Activated CD8-positive, alpha-beta memory T cell treated with anti-CD3 and anti-CD28 coated beads, Interleukin-2, amount 10 ng/mL, durations not matched to agents 7 days and 5 days (primary cell): ENCODE measurements at regions of chr7 and their contacts with region 1.

Region 1: GRCh38 chr7:129825496-129826267 is 127.1 kb downstream of the UBE2H start:
- DNase-seq: peak; percentile 91
- ATAC-seq: peak; percentile 85
- H3K4me3 Mint-ChIP-seq: peak overlapping the region; percentile 87
- H3K27ac Mint-ChIP-seq: peak overlapping the region; percentile 82
- H3K4me1 Mint-ChIP-seq: peaks cover 24% of the 10 kb centered on the region
- H3K27me3 Mint-ChIP-seq: peaks cover 3% of the 10 kb centered on the region

Region 2: DNA sequence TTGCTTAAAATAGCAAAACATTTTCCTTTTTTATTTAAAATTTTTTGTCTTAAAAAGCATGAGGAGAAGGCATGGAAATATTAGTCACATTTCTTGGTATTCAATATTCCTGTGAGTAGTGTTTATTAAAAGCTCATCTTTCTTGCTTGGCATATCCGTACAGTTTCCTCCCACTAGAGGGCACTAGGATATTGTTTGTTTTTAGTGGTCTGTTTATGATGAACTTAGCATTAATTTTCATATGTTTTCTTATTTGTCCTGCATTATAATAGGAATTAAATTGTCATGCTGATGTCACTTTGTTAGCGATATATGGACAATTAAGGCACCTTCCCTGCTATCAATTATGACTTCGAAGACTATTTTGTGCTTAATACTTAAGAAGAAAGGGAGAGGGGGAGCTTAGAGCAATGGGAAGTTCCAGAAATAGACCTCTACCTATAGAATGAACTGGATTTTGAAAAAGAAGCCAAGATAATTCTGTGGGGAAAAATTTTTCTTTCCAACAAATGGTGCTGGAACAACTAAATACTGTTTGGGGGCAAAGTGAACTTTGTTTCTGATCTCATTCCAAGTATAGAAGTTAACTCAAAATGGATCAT is 482.5 kb before region 1 on chr7:
- CTCF ChIA-PET with region 1: interaction called, 10 read pairs
- DNase-seq: no peak
- ATAC-seq: no peak
- H3K4me3 Mint-ChIP-seq: no peak overlapping the region
- H3K27ac Mint-ChIP-seq: no peak overlapping the region
- H3K4me1 Mint-ChIP-seq: peaks cover 41% of the 10 kb centered on the region
- H3K27me3 Mint-ChIP-seq: peaks cover 7% of the 10 kb centered on the region

Region 3: DNA sequence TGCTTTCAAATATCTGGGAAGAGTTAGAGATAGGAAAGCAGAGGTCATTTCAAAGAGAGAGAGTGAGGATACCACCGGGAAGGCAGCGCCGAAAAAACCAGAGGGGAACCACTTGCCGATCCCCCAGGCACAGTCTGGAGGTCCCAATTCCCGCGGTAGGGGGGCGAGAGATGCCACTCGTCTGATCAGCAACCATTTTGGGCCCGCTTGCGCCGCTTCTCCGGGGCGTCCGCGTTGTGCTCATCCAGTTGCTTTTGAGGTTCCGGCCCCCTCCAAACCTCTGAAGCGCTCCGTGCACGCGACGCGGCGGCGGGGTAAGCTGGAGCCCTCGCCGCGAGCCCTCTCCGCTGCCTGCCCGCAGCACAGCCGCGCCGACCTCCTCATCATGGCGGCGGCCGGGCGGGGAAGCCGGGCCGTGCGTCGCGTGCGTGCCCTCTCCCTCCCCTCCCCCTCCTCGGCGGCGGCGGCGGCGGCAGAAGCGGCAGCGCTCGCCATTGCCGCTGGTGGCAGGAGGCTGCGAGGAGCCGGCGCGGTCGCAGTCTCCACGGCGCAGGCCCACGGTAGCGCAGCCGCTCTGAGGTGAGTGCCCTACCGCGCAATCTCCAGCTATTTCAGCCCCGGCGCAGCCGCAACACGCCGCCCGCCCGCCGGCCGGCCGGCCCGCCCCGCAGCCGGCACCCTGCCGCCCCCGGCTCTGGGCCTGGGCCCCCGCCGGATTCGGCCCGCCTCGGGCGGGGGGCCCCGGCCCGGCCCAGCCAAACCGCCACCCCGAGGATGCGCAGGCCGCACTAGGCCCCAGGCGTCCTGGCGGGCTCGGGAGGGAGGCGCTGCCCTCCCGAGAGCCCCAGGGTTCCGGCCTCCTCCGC is 214.2 kb before region 1 on chr7 and contains the start of gene NRF1:
- CTCF ChIA-PET with region 1: interaction called, 21 read pairs
- DNase-seq: peak; percentile 92
- ATAC-seq: peak; percentile 88
- H3K4me3 Mint-ChIP-seq: peak within 1 kb of the TSS; percentile 94
- H3K27ac Mint-ChIP-seq: peak within 1 kb of the TSS; percentile 92
- H3K4me1 Mint-ChIP-seq: peaks cover 56% of the 10 kb centered on the region
- H3K27me3 Mint-ChIP-seq: no peaks in the 10 kb centered on the region
- total RNA-seq, gene NRF1: 26.4 to 29.5 TPM

Region 4: GRCh38 chr7:129635300-129636029 is 190.2 kb before region 1 on chr7:
- CTCF ChIA-PET with region 1: interaction called, 11 read pairs
- DNase-seq: peak; percentile 79
- ATAC-seq: peak; percentile 96
- H3K4me3 Mint-ChIP-seq: no peak overlapping the region
- H3K27ac Mint-ChIP-seq: no peak overlapping the region
- H3K4me1 Mint-ChIP-seq: peaks cover 22% of the 10 kb centered on the region
- H3K27me3 Mint-ChIP-seq: no peaks in the 10 kb centered on the region

Region 5: DNA sequence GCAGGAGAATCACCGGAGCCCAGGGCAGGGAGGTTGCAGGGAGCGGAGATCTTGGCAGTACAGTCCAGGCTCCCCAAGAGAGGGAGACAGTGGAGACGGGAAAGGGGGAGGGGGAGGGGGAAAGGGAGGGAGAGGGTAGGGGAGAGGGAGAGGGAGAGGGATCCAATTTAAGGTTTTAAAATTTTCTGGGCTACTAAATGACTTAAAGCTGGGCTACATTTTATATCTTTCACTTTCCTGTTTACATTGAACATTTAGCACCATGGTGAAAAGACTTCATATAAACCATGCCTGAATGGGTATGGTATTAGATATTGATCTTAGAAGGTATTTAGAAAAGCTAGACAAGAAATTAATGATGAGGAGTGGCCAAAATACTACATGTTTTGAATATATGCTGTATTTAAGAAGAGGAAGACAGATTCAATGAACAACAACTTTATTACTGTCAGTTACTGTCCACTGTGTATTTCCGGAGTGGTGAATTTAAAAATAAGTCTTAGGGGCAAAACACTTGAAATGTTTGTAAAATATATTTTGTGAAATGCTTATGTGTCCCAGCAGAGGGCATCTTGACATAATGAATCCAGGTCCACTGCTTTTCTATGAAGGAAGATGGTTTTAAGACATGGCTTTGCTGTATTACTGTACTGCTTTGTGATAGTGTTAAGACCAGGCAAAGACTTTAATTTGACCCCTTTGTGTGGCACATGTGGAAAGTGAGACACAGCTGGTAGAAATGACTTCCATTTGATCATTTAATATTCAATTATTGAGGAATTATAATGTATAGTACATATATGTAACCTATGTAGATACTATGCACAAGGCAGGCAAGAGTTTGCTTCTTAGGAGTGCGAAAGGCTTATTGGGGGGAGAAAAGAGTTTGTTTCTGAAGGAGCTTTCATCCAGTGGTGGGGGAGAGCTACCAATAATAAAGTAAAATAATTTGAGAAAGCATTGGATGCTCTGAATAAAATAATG is 161.4 kb before region 1 on chr7:
- CTCF ChIA-PET with region 1: interaction called, 17 read pairs
- DNase-seq: no peak
- ATAC-seq: no peak
- H3K4me3 Mint-ChIP-seq: no peak overlapping the region
- H3K27ac Mint-ChIP-seq: no peak overlapping the region
- H3K4me1 Mint-ChIP-seq: no peaks in the 10 kb centered on the region
- H3K27me3 Mint-ChIP-seq: no peaks in the 10 kb centered on the region

Region 6: GRCh38 chr7:129840757-129841156 is 15.1 kb after region 1 on chr7:
- CTCF ChIA-PET with region 1: interaction called, 12 read pairs
- DNase-seq: no peak
- ATAC-seq: no peak
- H3K4me3 Mint-ChIP-seq: no peak overlapping the region
- H3K27ac Mint-ChIP-seq: peak overlapping the region; percentile 32
- H3K4me1 Mint-ChIP-seq: peaks cover 43% of the 10 kb centered on the region
- H3K27me3 Mint-ChIP-seq: no peaks in the 10 kb centered on the region

Region 7: GRCh38 chr7:129882531-129882930 is 56.8 kb after region 1 on chr7:
- CTCF ChIA-PET with region 1: no interaction called
- DNase-seq: no peak
- ATAC-seq: no peak
- H3K4me3 Mint-ChIP-seq: no peak overlapping the region
- H3K27ac Mint-ChIP-seq: no peak overlapping the region
- H3K4me1 Mint-ChIP-seq: peaks cover 24% of the 10 kb centered on the region
- H3K27me3 Mint-ChIP-seq: no peaks in the 10 kb centered on the region

Region 8: DNA sequence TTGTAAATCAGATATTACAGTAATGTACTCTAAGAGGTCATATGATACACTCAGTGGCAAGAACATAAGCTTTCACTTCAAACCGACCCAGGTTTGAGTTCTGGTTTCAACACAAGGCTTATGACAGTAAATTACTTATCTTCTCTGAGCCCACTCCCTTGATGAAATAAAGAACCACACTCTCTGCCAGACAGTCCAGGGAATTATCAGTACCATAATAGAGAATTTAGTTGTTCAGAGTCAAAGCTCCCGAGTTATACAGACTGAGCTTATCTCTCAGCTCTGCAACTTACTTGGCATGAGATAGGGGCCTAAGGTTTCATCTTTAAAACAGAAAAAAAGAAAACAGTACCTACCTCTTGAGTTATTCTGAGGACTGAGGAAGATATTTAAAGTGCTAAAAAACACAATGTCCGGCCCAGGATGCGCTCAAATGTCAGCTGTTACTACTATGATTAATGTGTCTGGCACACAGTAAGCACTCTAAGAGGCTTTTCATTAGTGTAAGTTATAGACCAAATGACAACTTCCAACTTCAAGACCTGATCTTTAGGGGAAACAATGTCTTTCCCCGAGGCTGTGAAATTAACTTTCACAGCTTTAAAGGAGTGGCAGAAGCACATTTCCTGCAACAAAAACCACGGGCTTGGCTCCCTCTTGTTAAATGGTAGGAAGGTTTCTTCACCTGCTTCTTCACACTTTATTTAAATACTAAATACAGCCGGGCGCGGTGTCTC is 89.0 kb after region 1 on chr7:
- CTCF ChIA-PET with region 1: no interaction called
- DNase-seq: no peak
- ATAC-seq: no peak
- H3K4me3 Mint-ChIP-seq: no peak overlapping the region
- H3K27ac Mint-ChIP-seq: no peak overlapping the region
- H3K4me1 Mint-ChIP-seq: peaks cover 11% of the 10 kb centered on the region
- H3K27me3 Mint-ChIP-seq: no peaks in the 10 kb centered on the region

Region 9: GRCh38 chr7:130010689-130011412 is 185.2 kb after region 1 on chr7:
- CTCF ChIA-PET with region 1: interaction called, 115 read pairs
- DNase-seq: peak; percentile 93
- ATAC-seq: peak; percentile 70
- H3K4me3 Mint-ChIP-seq: no peak overlapping the region
- H3K27ac Mint-ChIP-seq: peak overlapping the region; percentile 75
- H3K4me1 Mint-ChIP-seq: peaks cover 12% of the 10 kb centered on the region
- H3K27me3 Mint-ChIP-seq: no peaks in the 10 kb centered on the region